ENCODE measurements at regions of chr16 and their contacts with region 1.

Region 1: GRCh38 chr16:84504420-84505248 is at the start of gene MEAK7:
- DNase-seq: peak; percentile 98
- ATAC-seq: peak; percentile 94
- H3K4me3 Mint-ChIP-seq: peak within 1 kb of the TSS; percentile 80
- H3K27ac Mint-ChIP-seq: peak within 1 kb of the TSS; percentile 94
- H3K4me1 Mint-ChIP-seq: peaks cover 65% of the 10 kb centered on the region
- H3K27me3 Mint-ChIP-seq: no peaks in the 10 kb centered on the region
- total RNA-seq, gene MEAK7: 37.9 to 73.9 TPM

Region 2: GRCh38 chr16:84518748-84519341 is 14.2 kb after region 1 on chr16:
- CTCF ChIA-PET with region 1: interaction called, 52 read pairs
- DNase-seq: peak; percentile 96
- ATAC-seq: peak; percentile 52
- H3K4me3 Mint-ChIP-seq: peak overlapping the region; percentile 63
- H3K27ac Mint-ChIP-seq: peak overlapping the region; percentile 96
- H3K4me1 Mint-ChIP-seq: peaks cover 95% of the 10 kb centered on the region
- H3K27me3 Mint-ChIP-seq: no peaks in the 10 kb centered on the region

Region 3: DNA sequence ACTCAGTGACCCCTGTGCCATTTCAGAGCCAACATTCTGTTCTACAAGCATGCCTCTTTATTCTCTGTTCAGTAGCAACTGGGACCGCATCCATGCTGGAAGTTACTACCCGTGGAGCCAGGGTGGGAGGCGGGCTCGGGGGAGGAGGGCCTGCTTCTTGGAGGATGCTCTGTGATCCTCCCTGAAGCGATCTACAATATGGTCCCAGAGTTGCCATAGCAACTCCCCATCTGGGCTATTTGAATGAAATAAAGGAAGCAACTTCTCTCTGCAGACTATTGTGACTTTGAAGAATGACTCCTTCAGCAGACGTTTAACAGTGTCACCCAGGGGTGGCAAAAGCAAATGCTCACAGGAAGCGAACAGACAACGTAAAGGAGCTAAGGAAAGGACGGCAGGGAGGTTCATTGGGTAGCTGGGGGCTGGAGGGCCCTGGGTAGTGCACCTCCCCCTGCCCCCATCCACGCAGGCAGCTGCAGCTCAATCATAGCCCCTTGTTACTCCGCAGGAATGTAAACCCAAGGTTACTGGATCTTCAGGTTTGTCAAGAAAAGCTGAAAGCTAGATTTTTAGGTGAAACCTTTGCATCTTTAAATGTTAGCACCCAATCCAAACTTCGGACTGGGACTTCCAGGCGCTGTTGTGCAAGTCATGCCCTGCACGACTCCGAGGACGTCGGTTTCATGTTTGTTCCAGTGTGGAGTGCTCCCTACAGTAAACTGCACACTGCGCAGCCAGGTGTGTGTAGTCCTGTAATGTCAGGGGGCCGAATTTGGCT is 51.0 kb after region 1 on chr16:
- CTCF ChIA-PET with region 1: interaction called, 28 read pairs
- DNase-seq: no peak
- ATAC-seq: no peak
- H3K4me3 Mint-ChIP-seq: peak overlapping the region; percentile 8
- H3K27ac Mint-ChIP-seq: peak overlapping the region; percentile 92
- H3K4me1 Mint-ChIP-seq: peaks cover 38% of the 10 kb centered on the region
- H3K27me3 Mint-ChIP-seq: no peaks in the 10 kb centered on the region

Region 4: DNA sequence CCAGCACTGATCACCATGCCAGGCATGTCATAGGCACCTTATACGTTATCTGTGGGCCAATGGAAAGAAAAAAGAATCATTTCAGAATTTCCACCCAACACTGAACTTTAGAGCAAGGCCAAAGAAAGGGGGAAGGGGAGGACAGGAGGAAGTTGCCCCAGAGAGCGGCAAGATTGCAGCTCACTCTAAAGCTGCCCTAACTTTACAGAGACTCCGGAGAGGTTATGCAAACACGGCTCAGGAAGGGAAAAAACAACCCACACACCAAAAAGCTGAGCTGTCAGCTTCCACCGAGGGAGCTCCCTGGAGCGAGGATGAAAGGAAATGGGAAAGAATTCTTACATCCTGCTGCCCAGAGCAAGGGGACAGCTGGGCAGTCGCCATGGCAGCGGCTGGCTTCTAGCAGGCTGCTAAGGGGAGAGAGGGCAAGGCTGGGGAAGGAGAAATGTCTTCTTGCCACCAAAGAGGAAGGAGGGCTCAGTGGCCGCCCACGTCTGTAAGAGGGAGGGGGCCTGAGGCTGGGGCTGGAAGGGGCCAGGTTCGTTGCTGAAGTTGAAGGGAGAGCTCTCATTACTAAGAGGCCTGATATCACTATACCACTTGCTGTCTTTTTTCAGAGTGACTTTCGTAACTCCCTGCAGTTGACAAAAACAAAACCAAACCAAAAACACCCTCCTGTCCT is 95.0 kb after region 1 on chr16:
- CTCF ChIA-PET with region 1: interaction called, 25 read pairs
- DNase-seq: peak; percentile 83
- ATAC-seq: peak; percentile 21
- H3K4me3 Mint-ChIP-seq: peak overlapping the region; percentile 77
- H3K27ac Mint-ChIP-seq: peak overlapping the region; percentile 97
- H3K4me1 Mint-ChIP-seq: peaks cover 87% of the 10 kb centered on the region
- H3K27me3 Mint-ChIP-seq: no peaks in the 10 kb centered on the region

Region 5: DNA sequence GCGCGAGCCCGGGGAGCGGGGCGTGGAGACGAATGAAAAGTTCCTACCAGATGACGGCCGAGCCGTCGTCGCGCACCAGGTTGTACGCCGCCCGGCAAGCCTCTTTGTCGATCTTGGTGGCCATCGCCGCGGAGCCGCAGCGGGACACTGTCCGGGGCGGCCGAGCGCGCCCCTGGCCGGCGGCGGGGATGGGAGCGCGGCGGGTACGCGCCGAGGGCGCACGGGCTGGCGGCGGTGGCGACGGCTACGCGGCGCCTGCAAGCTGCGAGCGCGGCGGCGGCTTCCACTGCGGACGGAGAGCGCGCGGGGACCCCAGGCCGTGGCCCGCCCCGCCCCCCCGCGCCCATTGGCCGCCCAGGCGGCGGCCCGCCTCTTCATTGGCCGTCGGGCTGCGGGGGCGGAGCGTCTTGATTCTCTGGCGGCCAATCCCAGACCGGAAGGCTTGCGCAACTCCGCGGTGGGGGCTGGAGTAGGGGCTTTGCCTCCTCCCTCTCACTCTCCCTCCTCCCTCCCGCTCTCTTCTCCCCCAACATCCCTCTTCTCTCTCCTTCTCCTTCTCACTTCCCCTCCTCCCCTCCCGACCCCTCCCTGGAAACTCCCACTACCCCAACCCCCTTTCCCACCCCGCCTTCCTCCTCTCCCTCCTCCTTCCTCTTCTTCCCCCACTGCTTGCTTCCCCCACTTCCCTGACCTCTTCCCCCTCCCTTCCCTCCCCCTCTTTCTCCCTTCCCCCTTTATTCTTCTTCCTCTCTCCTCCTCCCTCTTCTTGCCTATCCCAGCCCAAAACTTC is 113.4 kb after region 1 on chr16 and contains the start of gene COTL1:
- CTCF ChIA-PET with region 1: interaction called, 127 read pairs
- DNase-seq: peak; percentile 97
- ATAC-seq: peak; percentile 86
- H3K4me3 Mint-ChIP-seq: peak within 1 kb of the TSS; percentile 96
- H3K27ac Mint-ChIP-seq: peak within 1 kb of the TSS; percentile 87
- H3K4me1 Mint-ChIP-seq: peaks cover 41% of the 10 kb centered on the region
- H3K27me3 Mint-ChIP-seq: peaks cover 13% of the 10 kb centered on the region
- total RNA-seq, gene COTL1: 1,052 to 1,190 TPM

Region 6: GRCh38 chr16:84643180-84643583 is 138.5 kb after region 1 on chr16:
- CTCF ChIA-PET with region 1: no interaction called
- DNase-seq: no peak
- ATAC-seq: no peak
- H3K4me3 Mint-ChIP-seq: no peak overlapping the region
- H3K27ac Mint-ChIP-seq: no peak overlapping the region
- H3K4me1 Mint-ChIP-seq: peaks cover 35% of the 10 kb centered on the region
- H3K27me3 Mint-ChIP-seq: peaks cover 29% of the 10 kb centered on the region

Measured in activated CD8-positive, alpha-beta memory T cell treated with anti-CD3 and anti-CD28 coated beads, Interleukin-2, amount 10 ng/mL, durations not matched to agents 7 days and 5 days (primary cell).